Transverse colon (tissue), 4 donors: ENCODE measurements at regions of chr15 and their contacts with region 1.

Region 1: DNA sequence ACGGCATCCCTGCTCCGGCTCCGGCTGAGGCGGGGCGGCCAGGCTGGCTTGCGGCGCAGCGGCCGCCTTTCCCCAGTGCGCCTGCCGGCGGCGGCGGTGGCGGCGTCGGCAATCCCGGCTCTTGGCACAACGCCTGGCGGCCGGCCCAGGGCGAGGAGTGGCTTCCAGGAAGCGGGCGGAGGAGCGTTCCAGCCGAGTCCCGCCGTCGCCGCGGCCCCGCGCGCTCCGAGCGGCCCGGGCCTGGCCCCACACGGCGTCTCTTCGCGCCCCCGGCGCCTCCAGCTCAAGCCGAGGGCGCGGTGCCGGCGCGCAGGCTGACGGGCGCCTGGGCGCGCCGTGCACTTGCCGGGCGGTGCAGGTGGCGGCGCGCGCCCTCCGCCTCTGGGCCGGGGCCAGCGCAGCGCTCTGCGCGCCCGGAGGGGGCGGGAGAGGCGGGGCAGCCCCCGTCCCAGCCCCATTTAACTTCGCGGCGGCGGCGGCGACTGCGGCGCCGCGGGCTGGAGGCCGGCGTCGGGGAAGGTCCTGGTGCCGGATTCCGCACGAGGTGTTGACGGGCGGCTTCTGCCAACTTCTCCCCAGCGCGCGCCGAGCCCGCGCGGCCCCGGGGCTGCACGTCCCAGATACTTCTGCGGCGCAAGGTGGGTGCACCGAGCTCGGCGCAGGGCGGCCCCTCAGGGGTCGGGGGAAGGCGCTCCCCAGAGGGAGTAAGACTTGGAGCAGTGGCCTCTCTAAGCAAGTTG is at the start of gene ADAMTSL3:
- DNase-seq: peak; percentile 66
- H3K4me3 ChIP-seq: peak within 1 kb of the TSS; percentile 38 to 64 (median 48)
- H3K27ac ChIP-seq: peak within 1 kb of the TSS; percentile 51 to 90 (median 78)
- H3K4me1 ChIP-seq: peaks cover 0 to 9% (median 0%) of the 10 kb centered on the region in 4 donors
- H3K27me3 ChIP-seq: peaks cover 32% of the 10 kb centered on the region
- CTCF ChIP-seq: no peak
- EP300 ChIP-seq: no peak
- POLR2A ChIP-seq: no peak
- total RNA-seq, gene ADAMTSL3: 4.9 to 8.8 (median 6.8) TPM

Region 2: DNA sequence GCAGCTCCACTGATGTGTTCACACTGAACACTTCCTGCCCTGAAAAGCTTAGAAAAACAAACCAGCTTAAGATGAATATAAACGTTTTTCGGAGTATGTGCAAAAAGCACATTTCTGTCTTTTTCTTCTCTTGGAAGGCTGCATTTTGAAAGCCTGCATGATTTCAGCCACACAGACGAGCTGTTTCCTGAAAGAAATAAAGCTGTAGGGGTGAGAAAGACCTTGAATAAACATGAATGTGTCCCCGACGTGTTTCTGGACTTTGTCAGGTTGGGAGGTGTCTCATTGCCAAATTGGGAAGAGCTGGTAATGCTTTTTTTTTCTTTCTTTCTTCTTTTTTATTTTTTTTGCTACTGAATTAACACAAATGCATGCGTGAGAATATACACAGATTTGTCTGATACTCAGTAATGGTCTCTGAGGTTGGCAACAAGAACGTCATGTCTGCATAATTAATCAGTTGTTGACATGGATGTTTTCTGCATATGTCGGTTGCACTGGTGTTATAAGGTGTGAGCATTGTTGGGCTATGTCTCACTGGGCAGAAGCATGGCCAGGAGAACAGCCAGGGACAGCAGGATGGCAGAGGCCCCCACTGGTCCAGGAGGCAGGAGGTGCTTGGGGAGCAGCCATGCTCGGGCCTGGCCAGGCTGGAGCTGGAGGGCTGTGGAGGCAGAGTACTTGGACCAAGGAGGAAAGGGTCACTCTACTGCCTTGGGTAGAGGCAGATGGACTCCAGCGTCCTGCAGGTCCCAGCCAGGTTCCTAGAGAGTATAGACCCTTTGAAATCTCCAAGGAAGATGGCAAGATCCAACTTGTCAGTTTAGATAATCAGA is 39.2 kb after region 1 on chr15:
- in situ Hi-C with region 1: no loop called
- intact Hi-C with region 1: loop called (anchors 2 kb)
- DNase-seq: no peak
- H3K4me3 ChIP-seq: no peak overlapping the region
- H3K27ac ChIP-seq: peak overlapping the region; percentile 51 to 76 (median 65)
- H3K4me1 ChIP-seq: peaks cover 0 to 16% (median 6%) of the 10 kb centered on the region in 4 donors
- H3K27me3 ChIP-seq: no peaks in the 10 kb centered on the region
- CTCF ChIP-seq: no peak
- EP300 ChIP-seq: no peak
- POLR2A ChIP-seq: no peak

Region 3: GRCh38 chr15:83747050-83747717 is 93.4 kb after region 1 on chr15:
- in situ Hi-C with region 1: no loop called
- intact Hi-C with region 1: loop called (anchors 5 kb)
- DNase-seq: no peak
- H3K4me3 ChIP-seq: peak overlapping the region in 1 of 4 donors; percentile 16
- H3K27ac ChIP-seq: peak overlapping the region; percentile 58 to 75 (median 72)
- H3K4me1 ChIP-seq: peaks cover 0 to 13% (median 3%) of the 10 kb centered on the region in 4 donors
- H3K27me3 ChIP-seq: no peaks in the 10 kb centered on the region
- CTCF ChIP-seq: peak in 2 of 5 experiments; percentile 7 to 27
- EP300 ChIP-seq: no peak
- POLR2A ChIP-seq: no peak

Region 4: GRCh38 chr15:83854321-83854720 is 200.5 kb after region 1 on chr15:
- in situ Hi-C with region 1: no loop called
- intact Hi-C with region 1: loop called (anchors 10 kb)
- DNase-seq: no peak
- H3K4me3 ChIP-seq: no peak overlapping the region
- H3K27ac ChIP-seq: no peak overlapping the region
- H3K4me1 ChIP-seq: peaks cover 0 to 14% (median 2%) of the 10 kb centered on the region in 4 donors
- H3K27me3 ChIP-seq: no peaks in the 10 kb centered on the region
- CTCF ChIP-seq: no peak
- EP300 ChIP-seq: no peak
- POLR2A ChIP-seq: no peak